ENCODE measurements at regions of chr17 and their contacts with region 1.

Region 1: GRCh38 chr17:28763804-28764266 is 20.0 kb downstream of the TRAF4 start:
- ATAC-seq: peak; percentile 33 to 64 (median 44)
- H3K4me3 ChIP-seq: no peak overlapping the region
- H3K27ac ChIP-seq: no peak overlapping the region
- H3K4me1 ChIP-seq: no peaks in the 10 kb centered on the region

Region 2: GRCh38 chr17:28925912-28926365 is 162.1 kb after region 1 on chr17:
- in situ Hi-C with region 1: loop called in 3 of 9 experiments (anchors 10 to 25 kb)
- ATAC-seq: peak in 3 of 8 experiments; percentile 36 to 73 (median 62)
- H3K4me3 ChIP-seq: no peak overlapping the region
- H3K27ac ChIP-seq: no peak overlapping the region
- H3K4me1 ChIP-seq: no peaks in the 10 kb centered on the region

Measured in motor neuron (in vitro differentiated cells).